Heart left ventricle (tissue), 16 donors: ENCODE measurements at regions of chr5 and their contacts with region 1.

Region 1: DNA sequence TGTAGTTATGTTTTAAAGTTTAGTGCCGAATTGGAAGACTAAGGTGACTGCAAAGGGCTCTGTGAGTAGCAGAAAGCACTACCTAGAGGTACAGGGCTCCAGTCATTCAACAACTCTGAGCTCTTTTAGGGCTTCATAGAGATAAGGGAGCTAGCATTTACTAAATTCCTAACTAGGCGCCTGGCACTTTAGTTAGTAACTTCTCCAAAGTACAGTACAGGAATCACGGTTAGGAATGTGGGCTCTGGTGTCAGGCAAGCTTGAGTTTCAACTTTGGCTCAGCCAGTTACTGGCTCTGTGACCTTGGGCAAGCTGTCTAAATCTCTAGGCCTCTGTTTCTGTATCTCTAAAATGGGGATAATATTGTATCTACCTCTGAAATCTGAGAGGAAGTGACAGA is 115.3 kb downstream of the SLIT3 start:
- DNase-seq: no peak
- ATAC-seq: peak; percentile 40 to 80 (median 66)
- H3K4me3 ChIP-seq: no peak overlapping the region
- H3K27ac ChIP-seq: no peak overlapping the region
- H3K4me1 ChIP-seq: peaks cover 0 to 2% (median 0%) of the 10 kb centered on the region in 12 donors
- H3K27me3 ChIP-seq: no peaks in the 10 kb centered on the region
- CTCF ChIP-seq: no peak
- POLR2A ChIP-seq: no peak

Region 2: DNA sequence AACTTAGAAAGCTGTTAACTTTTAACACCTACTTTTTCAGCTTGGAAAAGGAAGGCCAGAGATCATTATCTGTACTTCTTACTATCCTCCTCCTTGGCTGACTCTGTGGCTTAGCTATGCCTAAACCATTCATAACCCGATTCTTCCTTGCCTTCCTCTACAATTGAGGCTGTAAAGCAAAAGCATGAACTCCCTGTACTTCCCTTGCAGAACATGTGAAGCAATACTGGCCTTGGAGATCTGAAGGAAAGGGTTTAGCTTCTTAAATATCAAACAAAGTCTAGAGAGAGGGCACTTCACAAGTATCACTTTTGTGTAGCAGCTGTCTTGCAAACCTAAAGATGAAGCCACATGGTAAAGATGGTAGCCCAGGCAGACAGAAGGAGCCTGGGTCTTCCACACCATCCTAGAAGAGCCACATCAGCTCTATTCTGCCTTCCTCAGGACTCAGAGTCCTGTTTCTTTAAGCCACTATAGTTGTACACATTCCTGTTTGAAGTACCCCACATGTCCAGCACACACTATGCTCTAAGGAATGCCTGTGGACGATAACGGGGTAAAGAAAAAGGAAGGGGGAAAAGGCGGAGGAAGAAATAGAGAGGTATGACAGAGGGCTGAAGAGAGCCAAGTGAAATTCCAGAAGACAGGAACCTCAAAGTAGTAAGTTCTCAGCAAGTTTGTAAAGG is 53.9 kb before region 1 on chr5:
- intact Hi-C with region 1: loop called in 1 of 10 experiments (anchors 5 kb)
- DNase-seq: no peak
- ATAC-seq: peak in 1 of 4 donors; percentile 40
- H3K4me3 ChIP-seq: no peak overlapping the region
- H3K27ac ChIP-seq: no peak overlapping the region
- H3K4me1 ChIP-seq: peaks cover 0 to 18% (median 0%) of the 10 kb centered on the region in 12 donors
- H3K27me3 ChIP-seq: no peaks in the 10 kb centered on the region
- CTCF ChIP-seq: no peak
- POLR2A ChIP-seq: no peak